ENCODE measurements at regions of chr6 and their contacts with region 1.

Region 1: DNA sequence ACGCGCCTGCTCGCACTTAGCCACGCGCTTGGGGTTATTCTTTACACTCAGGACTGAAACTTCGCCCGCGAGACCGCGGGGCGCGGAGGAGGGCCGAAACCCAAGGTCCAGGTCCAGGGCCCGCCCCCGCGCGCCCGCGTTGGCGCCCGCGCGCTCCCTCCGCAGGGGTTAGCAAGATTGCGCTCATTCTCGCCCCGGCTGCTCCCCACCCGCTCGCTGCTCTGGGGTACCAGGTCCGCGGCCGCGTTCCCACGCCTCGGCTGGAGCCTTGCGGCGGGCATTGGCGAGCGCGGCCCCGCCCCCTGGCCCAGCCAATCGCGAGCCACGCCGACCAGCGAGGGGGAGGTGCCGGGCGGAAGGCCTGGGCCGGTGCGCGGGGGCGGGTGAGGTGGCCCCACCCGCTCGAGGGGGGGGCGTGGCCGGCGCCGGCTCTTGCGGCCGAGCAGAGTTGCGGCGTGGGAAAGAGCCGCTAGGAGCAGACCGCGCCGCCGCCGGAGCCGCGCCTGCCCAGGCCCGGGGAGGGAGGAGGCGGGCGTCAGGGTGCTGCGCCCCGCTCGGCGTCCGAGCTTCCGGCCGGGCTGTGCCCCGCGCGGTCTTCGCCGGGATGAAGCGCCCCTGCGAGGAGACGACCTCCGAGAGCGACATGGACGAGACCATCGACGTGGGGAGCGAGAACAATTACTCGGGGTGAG is at the start of gene HEY2:
- DNase-seq: peak; percentile 82 to 98 (median 95)

Region 2: GRCh38 chr6:125611573-125612344 is 137.6 kb before region 1 on chr6:
- intact Hi-C with region 1: loop called (anchors 10 kb)
- DNase-seq: peak in 28 of 42 donors; percentile 6 to 66 (median 28)

Region 3: GRCh38 chr6:125700581-125701353 is 48.6 kb before region 1 on chr6:
- intact Hi-C with region 1: loop called (anchors 5 kb)
- DNase-seq: peak in 40 of 42 donors; percentile 4 to 80 (median 45)